H1 (cell line): ENCODE measurements at regions of chr9 and their contacts with region 1.

Region 1: GRCh38 chr9:129460323-129461261 is 160.3 kb downstream of the C9orf50 start:
- DNase-seq: peak; percentile 57 to 83
- H3K4me3 ChIP-seq: peak overlapping the region; percentile 27 to 67 (median 56)
- H3K27ac ChIP-seq: peak overlapping the region; percentile 60; the same call in 1 of the 2 replicates
- H3K4me1 ChIP-seq: peaks cover 3 to 23% (median 19%) of the 10 kb centered on the region in 4 experiments
- H3K27me3 ChIP-seq: peaks cover 0 to 16% (median 8%) of the 10 kb centered on the region in 4 experiments; a peak in 5 of 7 replicates
- CTCF ChIP-seq: peak in 1 of 3 experiments; percentile 3; a peak in 2 of 4 replicates
- EP300 ChIP-seq: peak in 1 of 2 experiments; percentile 3; a peak in 1 of 3 replicates
- POLR2A ChIP-seq: peak in 1 of 2 experiments; percentile 43; a peak in 1 of 3 replicates
- RAD21 ChIP-seq: peak in 1 of 2 experiments; percentile 17; a peak in 1 of 4 replicates

Region 2: DNA sequence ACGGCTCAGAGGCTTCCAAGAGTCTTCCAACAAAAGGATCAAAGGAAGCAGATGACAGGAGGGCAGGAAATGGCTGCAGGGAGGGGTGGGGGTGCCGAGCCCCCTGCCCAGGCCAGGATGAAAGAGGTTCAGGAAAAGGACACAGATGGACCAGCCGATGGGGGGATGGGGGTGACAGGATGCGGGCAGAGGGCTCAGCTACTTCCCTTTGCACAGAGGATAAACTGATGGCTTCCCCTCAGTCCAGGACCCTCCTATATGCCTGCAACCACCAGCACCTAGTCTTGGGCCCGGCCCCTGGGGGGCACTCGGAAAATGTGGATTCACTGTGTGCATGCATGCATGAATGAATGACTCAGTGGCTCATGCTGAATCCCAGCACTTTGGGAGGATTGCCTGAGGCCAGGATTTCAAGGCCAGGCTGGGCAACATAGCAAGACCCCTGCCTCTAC is 12.1 kb after region 1 on chr9:
- CTCF ChIA-PET with region 1: interaction called, 7 read pairs
- POLR2A ChIA-PET with region 1: interaction called, 22 read pairs
- DNase-seq: no peak
- H3K4me3 ChIP-seq: no peak overlapping the region
- H3K27ac ChIP-seq: no peak overlapping the region
- H3K4me1 ChIP-seq: peaks cover 5 to 15% (median 11%) of the 10 kb centered on the region in 4 experiments
- H3K27me3 ChIP-seq: peaks cover 0 to 2% (median 0%) of the 10 kb centered on the region in 4 experiments; a peak in 2 of 7 replicates
- CTCF ChIP-seq: no peak
- EP300 ChIP-seq: no peak
- POLR2A ChIP-seq: no peak
- RAD21 ChIP-seq: no peak

Region 3: DNA sequence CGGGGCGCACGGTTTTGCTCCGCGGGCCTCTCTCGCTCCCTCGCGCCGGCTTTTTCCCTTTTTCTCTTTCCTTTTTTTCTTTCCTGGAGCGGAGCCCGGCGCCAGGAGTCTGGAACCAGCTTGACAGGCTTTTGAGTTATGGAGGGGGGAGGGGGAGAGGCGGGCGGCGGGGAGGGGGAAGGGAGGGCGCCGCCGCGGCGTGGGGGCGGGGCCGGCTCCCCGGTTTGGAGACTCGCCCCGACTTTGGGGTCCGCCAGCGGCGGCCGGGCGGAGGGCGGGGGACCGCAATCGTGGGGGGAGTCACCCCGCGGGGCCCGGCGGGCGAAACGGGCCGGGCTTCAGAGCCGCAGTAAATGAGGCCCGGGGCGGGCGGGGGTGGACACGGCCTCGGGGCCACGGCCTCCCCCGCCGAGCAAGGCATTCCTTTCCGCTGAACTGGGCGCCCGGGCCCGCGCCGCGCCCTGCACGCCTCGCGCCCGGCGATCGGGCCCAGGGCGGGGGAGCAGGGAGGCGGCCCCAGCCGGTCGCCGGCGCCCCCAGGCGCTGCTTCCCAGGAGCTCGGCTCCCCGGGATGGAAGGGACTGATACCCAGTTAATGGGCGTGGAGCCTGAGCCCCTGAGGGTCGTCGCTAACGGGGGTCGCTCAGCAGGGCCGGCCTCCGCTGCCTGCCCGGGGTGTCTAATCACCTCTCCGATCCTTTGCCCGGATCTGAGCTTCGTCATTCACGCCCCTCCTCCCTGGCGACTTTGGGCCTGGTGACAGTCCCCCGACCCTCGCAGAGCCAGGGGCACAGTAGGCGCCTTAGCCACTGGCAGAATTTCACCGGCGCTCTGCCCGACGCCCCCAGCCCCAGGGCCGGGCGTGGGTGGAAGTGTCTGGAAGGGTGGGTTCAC is 22.2 kb after region 1 on chr9:
- CTCF ChIA-PET with region 1: interaction called, 27 read pairs
- POLR2A ChIA-PET with region 1: interaction called, 7 read pairs
- DNase-seq: no peak
- H3K4me3 ChIP-seq: peak overlapping the region; percentile 31 to 66 (median 36)
- H3K27ac ChIP-seq: no peak overlapping the region
- H3K4me1 ChIP-seq: peaks cover 8 to 30% (median 19%) of the 10 kb centered on the region in 4 experiments
- H3K27me3 ChIP-seq: peaks cover 14 to 60% (median 51%) of the 10 kb centered on the region in 4 experiments
- CTCF ChIP-seq: no peak
- EP300 ChIP-seq: no peak
- POLR2A ChIP-seq: no peak
- RAD21 ChIP-seq: no peak

Region 4: GRCh38 chr9:129495534-129496325 is 35.1 kb after region 1 on chr9:
- CTCF ChIA-PET with region 1: interaction called, 5 read pairs
- POLR2A ChIA-PET with region 1: interaction called, 27 read pairs
- DNase-seq: peak; percentile 87 to 99
- H3K4me3 ChIP-seq: peak overlapping the region; percentile 39 to 66 (median 55)
- H3K27ac ChIP-seq: peak overlapping the region; percentile 30; the same call in 1 of the 2 replicates
- H3K4me1 ChIP-seq: peaks cover 2 to 41% (median 32%) of the 10 kb centered on the region in 4 experiments
- H3K27me3 ChIP-seq: peaks cover 0 to 16% (median 15%) of the 10 kb centered on the region in 4 experiments; a peak in 5 of 7 replicates
- CTCF ChIP-seq: no peak
- EP300 ChIP-seq: peak in 1 of 2 experiments; percentile 33; a peak in 1 of 3 replicates
- POLR2A ChIP-seq: no peak
- RAD21 ChIP-seq: peak in 1 of 2 experiments; percentile 15; a peak in 1 of 4 replicates